GM18951 (cell line): ENCODE measurements at regions of chr13 and their contacts with region 1.

Region 1: DNA sequence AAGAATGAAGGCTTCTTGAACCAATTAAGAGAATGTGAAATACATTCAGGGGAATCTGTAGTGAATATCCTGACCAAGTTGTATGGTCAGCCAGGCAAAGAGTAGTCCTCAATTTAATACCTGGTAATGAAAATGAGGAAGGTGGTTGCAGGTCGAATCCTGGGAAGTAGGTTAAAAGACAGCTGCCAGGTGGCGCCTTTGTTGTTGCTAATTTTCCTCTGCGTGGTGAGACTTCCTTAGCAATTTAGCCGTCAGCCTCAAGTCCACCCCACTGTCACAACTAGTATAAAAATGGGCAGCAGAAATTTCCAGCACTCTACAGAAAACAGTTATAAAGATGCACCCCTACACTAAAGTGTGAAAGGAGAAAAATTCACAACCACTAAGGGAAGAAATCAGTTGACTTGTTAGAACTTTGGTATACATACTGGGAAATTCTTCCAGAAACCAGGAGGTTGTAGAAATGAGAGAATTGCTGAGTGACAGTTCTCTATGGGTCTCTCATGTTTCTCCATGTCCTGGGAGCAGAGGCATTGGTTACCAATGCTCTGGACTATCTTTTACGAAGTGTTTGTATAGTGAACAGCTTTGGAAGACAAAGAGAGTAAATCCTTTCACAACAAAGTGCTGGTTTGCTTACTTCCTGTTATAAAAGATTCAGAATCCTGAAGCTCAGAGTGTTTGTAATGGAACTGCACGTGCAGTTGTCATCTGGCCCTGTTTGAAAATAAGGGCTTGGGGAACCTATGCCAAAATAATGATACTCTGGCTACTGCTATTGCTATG is 235.9 kb downstream of the NHLRC3 start:
- POLR2A ChIP-seq: no peak

Region 2: DNA sequence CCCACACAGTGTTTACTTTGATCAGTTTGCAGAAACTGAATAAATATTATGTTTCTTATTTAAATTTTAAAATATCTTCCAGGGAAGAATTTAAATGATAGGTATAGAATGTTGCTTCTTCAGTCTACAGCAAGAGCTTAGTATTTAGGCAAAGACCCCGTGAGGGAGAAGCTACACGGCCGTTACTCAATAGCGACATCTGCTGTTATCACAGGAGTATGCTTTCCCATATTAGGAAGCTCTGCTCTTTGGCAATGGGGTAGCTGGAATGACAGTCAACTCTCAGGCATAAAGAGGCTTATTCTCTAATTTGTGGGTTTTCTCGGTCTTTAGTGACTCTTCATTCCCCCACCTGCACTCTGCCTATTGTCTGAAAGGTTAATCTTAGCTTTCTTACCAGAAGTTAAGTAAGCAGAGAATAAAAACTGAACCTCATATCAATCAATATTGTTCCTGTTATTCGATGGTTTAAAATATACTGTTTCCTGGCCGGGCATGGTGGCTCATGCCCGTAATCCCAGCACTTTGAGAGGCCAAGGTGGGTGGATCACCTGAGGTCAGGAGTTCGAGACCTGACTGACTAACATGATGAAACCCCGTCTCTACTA is 342.0 kb after region 1 on chr13:
- in situ Hi-C with region 1: loop called (anchors 10 kb)
- POLR2A ChIP-seq: no peak